IMR-90 (cell line): ENCODE measurements at regions of chr5 and their contacts with region 1.

Region 1: GRCh38 chr5:84382363-84383295 is 2.1 kb downstream of the EDIL3 start:
- DNase-seq: peak; percentile 53
- ATAC-seq: peak; percentile 43
- H3K4me3 ChIP-seq: peak overlapping the region; percentile 92
- H3K27ac ChIP-seq: peak overlapping the region; percentile 87
- H3K4me1 ChIP-seq: peaks cover 4% of the 10 kb centered on the region
- H3K27me3 ChIP-seq: no peaks in the 10 kb centered on the region
- CTCF ChIP-seq: no peak
- POLR2A ChIP-seq: no peak
- RAD21 ChIP-seq: no peak

Region 2: DNA sequence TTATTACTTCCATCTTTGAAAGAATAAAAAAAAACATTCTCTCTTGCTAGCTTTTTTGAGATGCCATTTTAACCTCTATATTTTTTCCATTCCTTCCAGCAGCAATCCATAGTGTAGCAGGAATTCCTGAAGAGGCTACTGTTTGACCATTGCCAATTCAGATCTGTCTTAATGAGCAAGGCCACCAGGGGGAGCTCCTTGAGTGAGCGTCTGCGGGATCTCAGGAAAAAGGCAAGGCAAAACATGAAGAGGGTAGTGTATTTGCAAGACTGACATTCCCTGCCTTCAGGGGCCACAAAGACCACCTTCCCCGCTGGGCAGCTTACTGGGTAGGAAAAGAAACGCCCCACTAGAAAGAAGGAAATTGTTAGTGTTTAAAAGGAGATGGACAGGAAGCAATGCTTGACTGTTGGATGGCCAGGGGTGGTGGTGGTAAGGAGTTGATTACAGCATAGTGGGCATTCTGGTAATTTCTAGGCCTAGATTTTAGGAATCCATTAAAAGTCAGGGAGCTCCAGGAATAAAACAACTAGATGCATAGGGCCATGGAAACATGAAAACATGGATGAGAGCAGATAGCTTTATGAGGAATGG is 455.4 kb before region 1 on chr5:
- CTCF ChIA-PET with region 1: no interaction called
- POLR2A ChIA-PET with region 1: no interaction called
- dilution Hi-C with region 1: no loop called
- in situ Hi-C with region 1: loop called (anchors 5 kb)
- intact Hi-C with region 1: loop called (anchors 1 kb)
- DNase-seq: peak; percentile 64
- ATAC-seq: peak; percentile 53
- H3K4me3 ChIP-seq: no peak overlapping the region
- H3K27ac ChIP-seq: no peak overlapping the region
- H3K4me1 ChIP-seq: peaks cover 21% of the 10 kb centered on the region
- H3K27me3 ChIP-seq: no peaks in the 10 kb centered on the region
- CTCF ChIP-seq: peak; percentile 71
- POLR2A ChIP-seq: no peak
- RAD21 ChIP-seq: peak; percentile 73

Region 3: DNA sequence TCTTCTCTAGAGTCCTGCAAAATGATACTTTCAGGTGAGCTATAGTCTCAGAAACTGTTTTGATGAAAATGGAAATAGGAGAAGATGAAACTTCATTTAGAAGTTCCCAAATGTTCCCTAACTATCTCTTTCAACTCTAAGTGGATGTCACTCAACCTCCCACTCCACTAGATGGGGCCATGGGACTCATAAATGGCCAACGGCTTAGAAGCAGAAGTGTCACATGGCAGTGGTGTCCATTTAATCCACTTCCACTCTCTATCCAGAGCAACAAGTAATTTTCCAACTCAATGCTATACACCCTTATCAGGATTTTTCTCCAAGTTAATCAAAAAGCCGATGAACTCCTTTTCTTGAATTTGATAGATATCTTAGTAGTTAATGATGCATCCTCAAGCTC is 293.6 kb before region 1 on chr5:
- CTCF ChIA-PET with region 1: interaction called, 3 read pairs
- POLR2A ChIA-PET with region 1: no interaction called
- dilution Hi-C with region 1: no loop called
- in situ Hi-C with region 1: no loop called
- intact Hi-C with region 1: loop called (anchors 1 kb)
- DNase-seq: peak; percentile 44
- ATAC-seq: peak; percentile 53; the same call in 1 of the 2 replicates
- H3K4me3 ChIP-seq: no peak overlapping the region
- H3K27ac ChIP-seq: no peak overlapping the region
- H3K4me1 ChIP-seq: no peaks in the 10 kb centered on the region; the same call in 1 of the 2 replicates
- H3K27me3 ChIP-seq: no peaks in the 10 kb centered on the region
- CTCF ChIP-seq: peak; percentile 48
- POLR2A ChIP-seq: no peak
- RAD21 ChIP-seq: peak; percentile 60

Region 4: GRCh38 chr5:84274585-84275468 is 107.8 kb before region 1 on chr5:
- CTCF ChIA-PET with region 1: no interaction called
- POLR2A ChIA-PET with region 1: no interaction called
- dilution Hi-C with region 1: no loop called
- in situ Hi-C with region 1: no loop called
- intact Hi-C with region 1: loop called (anchors 1 kb)
- DNase-seq: peak; percentile 28
- ATAC-seq: no peak
- H3K4me3 ChIP-seq: no peak overlapping the region
- H3K27ac ChIP-seq: no peak overlapping the region
- H3K4me1 ChIP-seq: no peaks in the 10 kb centered on the region; the same call in 1 of the 2 replicates
- H3K27me3 ChIP-seq: no peaks in the 10 kb centered on the region
- CTCF ChIP-seq: peak; percentile 48
- POLR2A ChIP-seq: no peak
- RAD21 ChIP-seq: peak; percentile 50

Region 5: DNA sequence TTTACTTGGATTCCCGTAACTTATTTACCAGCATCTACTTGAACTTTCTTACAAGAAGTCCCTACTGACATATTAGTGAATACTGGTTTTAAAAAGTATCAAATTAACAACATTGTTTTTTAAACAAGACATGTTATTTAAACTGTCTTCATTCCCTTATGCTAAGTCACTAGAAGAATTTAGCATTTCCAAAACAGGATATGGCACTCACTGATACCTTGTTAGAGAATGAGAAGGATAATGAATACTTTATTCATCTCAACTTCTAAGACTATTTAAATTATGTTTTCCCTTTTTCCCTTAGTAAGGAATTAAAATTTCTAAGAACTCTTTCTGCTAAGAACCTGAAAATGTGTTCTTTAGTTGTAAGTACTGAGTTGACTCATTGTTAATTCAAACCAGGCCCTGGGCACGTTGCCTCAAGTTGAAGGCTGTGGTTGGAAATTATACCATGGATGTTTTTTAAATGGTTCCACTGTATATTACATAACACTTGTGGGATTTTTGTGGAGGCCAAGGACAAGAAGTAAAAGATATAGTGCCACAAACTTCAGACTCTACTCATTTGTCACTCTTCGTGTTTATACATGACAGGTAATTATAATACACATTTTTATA is 221.0 kb after region 1 on chr5:
- CTCF ChIA-PET with region 1: no interaction called
- POLR2A ChIA-PET with region 1: no interaction called
- dilution Hi-C with region 1: no loop called
- in situ Hi-C with region 1: no loop called
- intact Hi-C with region 1: loop called (anchors 5 kb)
- DNase-seq: peak; percentile 88
- ATAC-seq: peak; percentile 94
- H3K4me3 ChIP-seq: no peak overlapping the region
- H3K27ac ChIP-seq: no peak overlapping the region
- H3K4me1 ChIP-seq: no peaks in the 10 kb centered on the region
- H3K27me3 ChIP-seq: no peaks in the 10 kb centered on the region
- CTCF ChIP-seq: no peak
- POLR2A ChIP-seq: no peak
- RAD21 ChIP-seq: no peak